Endothelial cell of umbilical vein (primary cell): ENCODE measurements at regions of chr6 and their contacts with region 1.

Region 1: DNA sequence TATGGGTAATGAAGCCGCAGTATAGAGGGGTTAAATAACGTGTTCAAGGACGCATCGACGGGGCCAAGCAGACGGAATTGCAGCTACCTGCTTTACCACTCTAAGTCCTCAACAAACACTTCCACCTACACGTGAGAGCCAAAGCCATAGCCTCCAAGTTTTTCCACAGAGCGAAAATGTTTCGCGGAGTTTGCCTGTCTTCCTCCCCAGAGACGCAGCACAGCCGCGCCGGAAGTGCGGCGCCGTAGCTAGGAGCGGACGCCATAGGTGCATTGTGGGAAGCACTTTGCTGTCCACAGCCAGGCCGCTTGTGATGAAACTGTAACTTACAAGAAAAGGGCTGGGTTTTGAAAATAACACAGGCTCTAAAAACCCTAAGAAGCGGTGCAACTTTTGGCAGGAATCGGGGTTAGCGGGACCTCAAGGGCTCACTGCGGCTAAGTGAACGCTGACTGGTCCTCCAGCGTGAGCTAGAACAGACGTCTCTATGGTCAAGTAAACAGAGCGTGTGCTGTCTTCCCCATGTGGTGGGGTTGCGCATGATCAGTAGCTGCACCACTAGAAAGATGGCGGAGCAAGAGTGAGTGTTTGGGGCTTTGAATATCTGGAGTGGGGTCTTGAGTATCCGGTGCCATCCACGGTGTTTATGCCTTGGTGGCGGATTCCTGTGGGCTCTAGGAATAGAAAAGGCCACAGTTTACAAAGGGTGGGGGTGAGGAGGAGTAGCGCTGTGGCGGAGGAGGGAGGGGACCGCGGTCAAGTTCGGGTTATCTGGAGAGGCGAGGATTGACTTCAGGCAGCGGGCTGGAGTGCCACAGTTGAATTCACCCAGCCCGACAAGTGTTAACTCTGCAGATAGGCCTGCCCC is at the start of gene RPL7L1:
- DNase-seq: peak; percentile 90
- H3K4me3 ChIP-seq: peak within 1 kb of the TSS; percentile 77 to 91 (median 86)
- H3K27ac ChIP-seq: peak within 1 kb of the TSS; percentile 68
- H3K4me1 ChIP-seq: peaks cover 6% of the 10 kb centered on the region
- H3K27me3 ChIP-seq: no peaks in the 10 kb centered on the region
- CTCF ChIP-seq: no peak
- POLR2A ChIP-seq: peak; percentile 91
- total RNA-seq, gene RPL7L1: 94.4 and 103 TPM in 2 replicates

Region 2: GRCh38 chr6:42661540-42662153 is 218.0 kb before region 1 on chr6:
- CTCF ChIA-PET with region 1: interaction called, 49 read pairs
- POLR2A ChIA-PET with region 1: interaction called, 3 read pairs
- dilution Hi-C with region 1: no loop called
- intact Hi-C with region 1: loop called (anchors 1 kb)
- DNase-seq: peak; percentile 73
- H3K4me3 ChIP-seq: no peak overlapping the region
- H3K27ac ChIP-seq: no peak overlapping the region
- H3K4me1 ChIP-seq: no peaks in the 10 kb centered on the region
- H3K27me3 ChIP-seq: no peaks in the 10 kb centered on the region
- CTCF ChIP-seq: peak; percentile 71 to 75
- POLR2A ChIP-seq: no peak

Region 3: GRCh38 chr6:42692137-42692911 is 187.3 kb before region 1 on chr6:
- CTCF ChIA-PET with region 1: interaction called, 4 read pairs
- POLR2A ChIA-PET with region 1: no interaction called
- dilution Hi-C with region 1: no loop called
- intact Hi-C with region 1: loop called (anchors 1 kb)
- DNase-seq: peak; percentile 60
- H3K4me3 ChIP-seq: no peak overlapping the region
- H3K27ac ChIP-seq: peak overlapping the region; percentile 34
- H3K4me1 ChIP-seq: peaks cover 14% of the 10 kb centered on the region
- H3K27me3 ChIP-seq: no peaks in the 10 kb centered on the region
- CTCF ChIP-seq: no peak
- POLR2A ChIP-seq: no peak

Region 4: DNA sequence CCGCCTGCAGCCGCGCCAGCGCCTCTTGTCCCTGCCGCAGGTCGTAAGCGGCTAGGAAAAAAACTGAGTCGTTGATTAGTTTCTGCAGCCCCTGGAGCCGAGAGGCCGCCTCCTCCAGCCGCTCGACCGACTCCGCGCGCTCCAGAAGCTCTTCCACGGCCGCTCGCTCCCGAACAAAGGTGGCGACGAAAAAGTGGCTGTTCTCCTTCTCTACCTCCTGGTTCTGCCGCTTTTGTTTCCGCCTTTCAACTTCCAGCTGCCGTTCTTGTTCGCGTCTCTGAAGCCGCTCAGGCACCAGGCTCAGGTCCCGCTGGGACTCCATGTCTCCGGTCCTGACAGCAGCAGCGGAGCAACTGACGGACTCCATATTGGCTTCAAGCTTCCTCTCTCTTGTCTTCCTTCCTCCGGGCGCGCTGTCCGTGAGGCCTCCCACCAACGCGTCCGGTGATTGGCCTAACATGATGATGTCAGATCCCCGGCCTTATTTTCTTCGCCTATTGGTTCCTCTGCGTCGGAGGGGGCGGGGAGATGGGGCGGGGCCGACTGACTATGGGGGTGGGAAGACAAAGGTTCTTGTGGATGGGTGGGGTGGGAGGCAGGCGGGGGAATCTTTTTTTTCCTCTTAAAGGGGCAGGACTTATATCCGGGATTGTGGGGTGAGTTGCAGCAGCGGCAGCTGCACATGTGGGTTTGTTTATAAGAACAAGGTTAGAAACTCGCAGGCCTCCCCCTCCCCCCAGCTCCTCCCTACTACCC is 133.7 kb before region 1 on chr6 and contains the start of gene TBCC:
- CTCF ChIA-PET with region 1: interaction called, 4 read pairs
- POLR2A ChIA-PET with region 1: interaction called, 6 read pairs
- dilution Hi-C with region 1: no loop called
- intact Hi-C with region 1: loop called (anchors 1 kb)
- DNase-seq: peak; percentile 98
- H3K4me3 ChIP-seq: peak within 1 kb of the TSS; percentile 84 to 92 (median 90)
- H3K27ac ChIP-seq: peak within 1 kb of the TSS; percentile 72
- H3K4me1 ChIP-seq: peaks cover 25% of the 10 kb centered on the region
- H3K27me3 ChIP-seq: no peaks in the 10 kb centered on the region
- CTCF ChIP-seq: no peak
- POLR2A ChIP-seq: peak; percentile 97
- total RNA-seq, gene TBCC: 17.1 and 19.1 TPM in 2 replicates

Region 5: DNA sequence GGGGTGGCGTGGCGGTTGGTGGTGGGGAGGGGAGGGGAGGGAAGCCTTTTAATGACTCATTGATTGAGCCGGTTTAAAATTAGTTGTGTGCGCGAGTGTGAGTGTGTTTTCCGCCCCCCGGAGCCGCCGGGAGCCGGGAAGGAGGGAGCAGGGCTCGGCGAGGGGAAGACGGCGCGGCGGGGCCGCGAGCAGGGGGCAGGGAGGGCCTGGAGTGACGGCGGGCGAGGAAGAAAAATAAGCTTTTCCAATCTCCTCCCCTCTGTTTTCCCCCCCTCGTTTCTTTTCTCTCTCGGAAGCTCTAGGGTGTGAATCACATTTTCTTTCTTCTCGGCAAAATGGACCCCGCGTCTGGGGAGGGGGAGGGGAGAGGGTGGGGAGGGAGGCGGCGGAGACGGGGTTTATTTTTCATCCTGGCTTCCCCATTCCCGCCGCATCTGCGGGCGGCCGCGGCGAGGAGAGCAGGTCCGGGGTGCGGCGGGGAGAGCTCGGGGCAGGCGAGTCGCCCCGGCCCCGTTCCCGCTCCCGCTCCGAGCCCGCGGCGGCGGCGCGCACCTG is 96.9 kb before region 1 on chr6:
- CTCF ChIA-PET with region 1: interaction called, 5 read pairs
- POLR2A ChIA-PET with region 1: interaction called, 14 read pairs
- dilution Hi-C with region 1: no loop called
- intact Hi-C with region 1: loop called (anchors 1 kb)
- DNase-seq: peak; percentile 95
- H3K4me3 ChIP-seq: peak overlapping the region; percentile 87 to 98 (median 94)
- H3K27ac ChIP-seq: peak overlapping the region; percentile 99
- H3K4me1 ChIP-seq: peaks cover 16% of the 10 kb centered on the region
- H3K27me3 ChIP-seq: no peaks in the 10 kb centered on the region
- CTCF ChIP-seq: no peak
- POLR2A ChIP-seq: peak; percentile 59

Region 6: DNA sequence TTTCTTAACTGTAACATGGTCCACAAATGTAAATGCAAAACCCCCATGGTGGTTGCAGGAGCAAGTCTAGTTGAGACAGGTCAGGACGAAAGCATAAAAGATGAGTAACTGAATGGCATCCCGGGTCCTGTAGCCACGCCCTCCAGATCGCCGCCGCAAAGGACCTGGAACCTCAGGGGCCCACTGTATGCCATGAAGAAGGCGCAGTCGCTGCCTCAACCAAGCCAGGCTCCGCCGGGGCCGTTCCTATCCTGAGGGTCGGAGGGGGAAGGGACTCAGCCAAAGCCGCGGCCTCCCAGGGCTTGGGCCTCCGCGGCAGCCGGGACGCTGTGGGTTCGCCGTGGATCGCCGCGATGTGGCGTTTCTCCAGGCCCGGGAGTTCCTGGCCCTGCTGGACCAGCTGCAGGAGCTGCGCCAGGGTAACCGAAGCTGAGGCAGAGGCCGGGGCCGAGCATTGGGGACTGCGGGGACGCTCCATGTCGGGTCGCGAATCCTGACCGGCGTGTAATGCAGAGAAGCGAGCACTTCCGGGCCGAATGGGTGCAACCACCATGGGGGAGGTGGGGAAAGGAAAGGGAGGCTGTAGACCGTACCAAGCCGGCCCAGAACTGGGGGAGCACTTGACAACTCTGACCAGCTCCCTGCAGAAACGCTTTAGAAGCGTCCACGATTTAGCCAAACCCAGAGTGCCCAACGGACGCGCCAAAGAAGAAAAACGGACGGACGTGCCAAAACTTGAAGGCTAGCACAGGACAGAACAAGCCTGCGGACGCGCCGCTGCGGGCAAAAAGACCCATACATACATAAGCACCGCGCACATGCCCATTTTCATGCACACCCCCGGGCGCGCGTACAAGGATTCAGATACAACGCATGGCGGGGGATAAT is 10.9 kb after region 1 on chr6:
- CTCF ChIA-PET with region 1: no interaction called
- POLR2A ChIA-PET with region 1: interaction called, 5 read pairs
- dilution Hi-C with region 1: no loop called
- intact Hi-C with region 1: loop called (anchors 1 kb)
- DNase-seq: peak; percentile 95
- H3K4me3 ChIP-seq: peak overlapping the region; percentile 26 to 68 (median 62)
- H3K27ac ChIP-seq: peak overlapping the region; percentile 44
- H3K4me1 ChIP-seq: peaks cover 4% of the 10 kb centered on the region
- H3K27me3 ChIP-seq: no peaks in the 10 kb centered on the region
- CTCF ChIP-seq: no peak
- POLR2A ChIP-seq: peak; percentile 95